Heart right ventricle (tissue), 16 donors: ENCODE measurements at regions of chr10 and their contacts with region 1.

Region 1: GRCh38 chr10:17835688-17836087 is 26.5 kb downstream of the MRC1 start:
- DNase-seq: no peak
- ATAC-seq: no peak
- H3K4me3 ChIP-seq: no peak overlapping the region
- H3K27ac ChIP-seq: peak overlapping the region in 1 of 10 donors; percentile 59
- H3K4me1 ChIP-seq: peaks cover 0 to 52% (median 7%) of the 10 kb centered on the region in 9 donors
- H3K27me3 ChIP-seq: peaks cover 0 to 18% (median 0%) of the 10 kb centered on the region in 7 donors
- CTCF ChIP-seq: no peak

Region 2: DNA sequence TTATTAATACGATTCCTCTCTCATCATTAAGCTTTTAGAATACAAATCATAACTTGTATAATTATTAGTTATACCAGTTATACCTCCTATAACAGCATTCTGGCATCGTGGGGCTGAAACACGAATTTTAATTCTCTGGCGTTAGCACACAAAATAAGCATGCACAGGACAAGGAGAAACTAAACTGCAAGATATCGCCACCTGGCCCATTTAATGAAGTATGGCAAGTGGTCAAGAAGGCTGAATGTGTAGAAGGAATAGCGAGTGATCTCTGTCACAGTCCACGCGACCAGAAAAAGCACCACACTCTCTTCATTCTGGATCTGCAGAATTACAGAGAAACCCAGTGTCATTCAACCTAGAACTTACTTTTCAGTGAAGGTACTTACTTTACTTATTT is 236.6 kb before region 1 on chr10:
- intact Hi-C with region 1: no loop called
- DNase-seq: peak in 1 of 2 donors; percentile 22
- ATAC-seq: peak in 4 of 8 donors; percentile 35 to 62 (median 42)
- H3K4me3 ChIP-seq: no peak overlapping the region
- H3K27ac ChIP-seq: no peak overlapping the region
- H3K4me1 ChIP-seq: peaks cover 0 to 7% (median 0%) of the 10 kb centered on the region in 9 donors
- H3K27me3 ChIP-seq: no peaks in the 10 kb centered on the region
- CTCF ChIP-seq: peak in 7 of 9 donors; percentile 29 to 55 (median 35)

Region 3: DNA sequence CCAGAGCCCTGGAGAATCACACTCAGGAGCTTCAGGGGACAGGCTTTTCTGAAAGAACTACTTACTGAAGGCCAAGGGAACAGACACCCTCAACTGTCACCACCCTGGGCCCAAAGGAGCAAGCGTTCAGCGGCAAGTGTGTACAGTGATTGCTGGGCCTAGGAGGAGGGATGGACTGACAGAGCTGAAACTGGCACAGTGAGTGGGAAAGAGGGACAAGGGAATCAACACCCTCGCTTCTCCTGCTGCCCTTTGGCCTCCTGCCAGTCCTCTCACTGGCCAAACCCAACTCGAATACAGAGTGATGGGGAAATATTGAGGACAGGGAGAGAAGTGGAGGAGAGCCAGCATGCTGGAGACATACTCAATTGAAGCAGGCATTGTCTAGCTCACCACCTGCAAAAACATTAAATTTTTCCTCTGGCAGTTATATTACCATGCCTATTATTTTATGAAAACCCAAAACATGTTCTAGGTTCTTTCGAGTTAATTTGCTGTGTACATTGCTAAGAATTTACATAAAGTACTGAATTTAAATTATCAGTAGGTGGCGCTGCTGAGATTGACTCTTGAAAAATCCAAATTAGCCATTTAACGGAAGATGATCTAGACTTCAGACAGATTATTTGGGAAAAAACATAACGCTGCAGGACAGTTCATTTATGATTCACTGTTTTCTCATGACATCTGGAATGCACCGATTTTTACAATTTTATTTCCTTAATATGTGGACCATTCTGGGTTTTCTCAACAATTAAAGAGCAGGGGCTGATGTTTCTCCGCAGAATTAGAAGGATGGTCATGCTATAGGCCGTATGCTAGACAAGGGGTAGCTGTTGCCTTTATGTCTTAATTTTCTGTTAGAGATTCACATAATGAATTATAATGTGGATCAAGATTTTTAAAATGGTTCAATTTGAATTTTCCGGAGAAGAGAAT is 98.4 kb before region 1 on chr10:
- intact Hi-C with region 1: no loop called
- DNase-seq: peak; percentile 29 to 53
- ATAC-seq: peak in 7 of 8 donors; percentile 29 to 59 (median 43)
- H3K4me3 ChIP-seq: no peak overlapping the region
- H3K27ac ChIP-seq: peak overlapping the region in 7 of 10 donors; percentile 11 to 78 (median 29)
- H3K4me1 ChIP-seq: peaks cover 4 to 35% (median 19%) of the 10 kb centered on the region in 9 donors
- H3K27me3 ChIP-seq: no peaks in the 10 kb centered on the region
- CTCF ChIP-seq: peak; percentile 23 to 77 (median 67)

Region 4: DNA sequence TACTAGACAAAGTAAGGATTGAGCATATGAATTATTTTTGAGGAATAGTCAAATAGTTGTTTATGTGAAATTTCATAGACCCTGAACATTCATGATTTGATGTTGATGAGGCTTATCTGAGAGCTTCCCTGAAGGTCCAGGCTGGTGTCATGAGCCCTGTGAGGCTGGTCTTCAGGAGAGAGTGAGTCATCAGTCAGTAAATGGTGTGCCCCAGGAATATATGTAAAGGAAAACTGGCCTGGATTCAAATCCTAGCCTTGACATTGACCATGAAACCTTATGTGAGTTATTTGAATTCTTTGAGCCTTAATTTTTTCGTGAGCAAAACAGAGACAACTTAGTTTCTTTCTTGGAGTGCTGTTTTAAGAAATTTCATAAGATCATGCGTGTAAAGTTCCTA is 77.5 kb before region 1 on chr10:
- intact Hi-C with region 1: loop called in 1 of 10 experiments (anchors 2 kb)
- DNase-seq: no peak
- ATAC-seq: no peak
- H3K4me3 ChIP-seq: no peak overlapping the region
- H3K27ac ChIP-seq: no peak overlapping the region
- H3K4me1 ChIP-seq: peaks cover 0 to 26% (median 0%) of the 10 kb centered on the region in 9 donors
- H3K27me3 ChIP-seq: no peaks in the 10 kb centered on the region
- CTCF ChIP-seq: no peak